Posterior vena cava (tissue), 2 donors: ENCODE measurements at regions of chr15 and their contacts with region 1.

Region 1: DNA sequence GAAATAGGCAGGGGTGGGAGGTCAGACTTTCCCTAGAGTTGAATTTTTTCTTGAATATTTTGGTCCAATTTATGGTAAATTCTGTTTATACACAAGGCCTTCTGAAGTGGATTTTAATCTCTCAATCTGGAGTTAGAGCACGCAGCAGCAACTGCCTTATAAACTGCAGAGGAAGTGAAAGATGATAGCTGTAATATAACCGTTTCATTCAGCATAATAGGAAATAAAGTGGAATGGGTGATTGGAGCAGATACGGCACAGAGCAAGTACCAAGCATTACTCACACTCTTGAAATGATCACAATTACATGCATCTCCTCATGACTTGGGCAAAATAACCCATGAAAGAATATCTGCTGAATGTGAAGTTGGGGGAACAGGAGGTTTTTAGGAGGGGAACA is 106.8 kb downstream of the ARRDC4 start:
- DNase-seq: no peak

Region 2: GRCh38 chr15:97959724-97960363 is 107.5 kb before region 1 on chr15:
- intact Hi-C with region 1: loop called in 1 of 2 experiments (anchors 10 kb)
- DNase-seq: no peak

Region 3: DNA sequence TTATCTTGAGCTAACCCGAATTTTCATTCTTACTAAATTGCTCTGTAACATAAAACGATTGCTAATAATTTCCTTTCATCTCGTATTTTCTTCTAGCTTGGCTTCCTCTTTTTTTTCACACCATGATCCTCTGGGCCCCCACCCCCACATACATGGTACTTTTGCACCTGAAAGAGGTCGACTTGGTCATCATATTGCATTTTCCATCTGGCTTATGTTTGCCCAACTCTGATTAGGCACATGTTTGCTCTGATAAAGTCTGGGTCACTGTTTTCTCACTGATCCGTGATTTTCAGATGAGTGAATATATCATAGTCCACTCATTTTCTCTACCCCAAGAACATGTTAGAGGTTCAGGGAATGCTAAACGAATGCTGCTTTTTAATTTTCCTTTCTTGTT is 57.4 kb before region 1 on chr15:
- intact Hi-C with region 1: loop called in 1 of 2 experiments (anchors 2 kb)
- DNase-seq: no peak